Activated CD4-positive, alpha-beta T cell treated with anti-CD3 and anti-CD28 coated beads for 36 hours (primary cell): ENCODE measurements at regions of chr6 and their contacts with region 1.

Region 1: DNA sequence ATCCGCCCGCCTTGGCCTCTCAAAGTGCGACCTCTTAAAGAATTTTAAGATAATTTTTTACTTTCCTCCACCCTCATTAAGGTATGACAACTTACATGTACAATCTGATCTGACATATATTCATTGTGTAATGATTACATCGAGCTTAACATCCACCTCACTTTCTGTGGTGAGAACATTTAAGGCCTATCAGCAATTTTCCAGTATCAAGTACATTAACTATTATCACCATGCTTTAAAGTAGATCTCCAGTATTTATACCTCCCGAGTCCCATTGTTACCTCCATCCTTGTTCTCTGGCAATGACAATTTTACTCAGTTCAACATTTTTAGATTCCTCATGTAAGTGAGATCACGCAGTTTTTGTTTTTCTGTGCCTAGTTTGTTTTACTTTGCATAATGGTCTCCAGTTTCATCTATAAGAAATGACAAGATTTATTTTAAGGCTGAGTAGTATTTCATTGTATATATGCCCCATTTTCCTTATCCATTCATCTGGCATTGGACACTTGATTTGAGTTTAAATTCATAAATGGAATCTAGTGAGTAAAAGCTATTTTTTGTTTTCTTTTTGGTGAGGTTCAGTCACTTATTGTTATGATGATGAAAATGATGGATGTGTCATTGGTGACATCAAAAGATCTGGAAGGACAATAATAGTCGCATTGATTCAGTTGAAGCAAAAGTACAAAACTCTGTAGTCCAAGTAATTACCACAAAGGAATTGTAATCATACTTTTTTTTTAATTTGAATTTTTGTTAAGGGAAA is 87.0 kb downstream of the OR2B2 start:
- DNase-seq: no peak
- ATAC-seq: peak; percentile 3
- H3K4me3 Mint-ChIP-seq: peak overlapping the region; percentile 79
- H3K27ac Mint-ChIP-seq: peak overlapping the region; percentile 92
- H3K4me1 Mint-ChIP-seq: peaks cover 20% of the 10 kb centered on the region
- H3K27me3 Mint-ChIP-seq: no peaks in the 10 kb centered on the region

Region 2: DNA sequence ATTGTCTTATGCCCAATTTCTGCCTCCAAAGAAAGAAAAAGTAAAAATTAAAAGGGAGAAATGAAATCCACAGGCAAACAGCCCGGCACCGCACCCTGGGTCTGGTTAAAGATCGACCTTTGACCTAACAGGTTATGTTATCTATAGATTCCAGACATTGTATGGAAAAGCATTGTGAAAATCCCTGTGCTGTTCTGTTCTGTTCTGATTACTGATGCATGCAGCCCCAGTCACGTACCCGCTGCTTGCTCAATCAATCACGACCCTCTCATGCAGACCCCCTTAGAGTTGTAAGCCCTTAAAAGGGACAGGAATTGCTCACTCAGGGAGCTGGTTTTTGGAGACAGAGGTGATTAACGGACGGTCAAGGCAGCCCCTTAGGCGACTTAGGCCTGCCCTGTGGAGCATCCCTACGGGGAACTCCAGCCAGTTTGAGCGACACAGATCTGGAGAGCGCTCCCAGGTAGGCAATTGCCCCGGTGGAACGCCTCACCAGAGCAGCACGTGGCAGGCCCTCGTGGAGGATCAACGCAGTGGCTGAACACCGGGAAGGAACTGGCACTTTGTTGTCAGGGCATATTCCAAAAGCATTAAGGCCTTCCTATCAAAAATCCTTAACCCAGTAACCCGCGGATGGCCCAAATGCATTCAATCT is 1750.0 kb before region 1 on chr6:
- CTCF ChIA-PET with region 1: no interaction called
- POLR2A ChIA-PET with region 1: no interaction called
- intact Hi-C with region 1: no loop called
- DNase-seq: no peak
- ATAC-seq: no peak
- H3K4me3 Mint-ChIP-seq: no peak overlapping the region
- H3K27ac Mint-ChIP-seq: no peak overlapping the region
- H3K4me1 Mint-ChIP-seq: peaks cover 6% of the 10 kb centered on the region
- H3K27me3 Mint-ChIP-seq: no peaks in the 10 kb centered on the region

Region 3: DNA sequence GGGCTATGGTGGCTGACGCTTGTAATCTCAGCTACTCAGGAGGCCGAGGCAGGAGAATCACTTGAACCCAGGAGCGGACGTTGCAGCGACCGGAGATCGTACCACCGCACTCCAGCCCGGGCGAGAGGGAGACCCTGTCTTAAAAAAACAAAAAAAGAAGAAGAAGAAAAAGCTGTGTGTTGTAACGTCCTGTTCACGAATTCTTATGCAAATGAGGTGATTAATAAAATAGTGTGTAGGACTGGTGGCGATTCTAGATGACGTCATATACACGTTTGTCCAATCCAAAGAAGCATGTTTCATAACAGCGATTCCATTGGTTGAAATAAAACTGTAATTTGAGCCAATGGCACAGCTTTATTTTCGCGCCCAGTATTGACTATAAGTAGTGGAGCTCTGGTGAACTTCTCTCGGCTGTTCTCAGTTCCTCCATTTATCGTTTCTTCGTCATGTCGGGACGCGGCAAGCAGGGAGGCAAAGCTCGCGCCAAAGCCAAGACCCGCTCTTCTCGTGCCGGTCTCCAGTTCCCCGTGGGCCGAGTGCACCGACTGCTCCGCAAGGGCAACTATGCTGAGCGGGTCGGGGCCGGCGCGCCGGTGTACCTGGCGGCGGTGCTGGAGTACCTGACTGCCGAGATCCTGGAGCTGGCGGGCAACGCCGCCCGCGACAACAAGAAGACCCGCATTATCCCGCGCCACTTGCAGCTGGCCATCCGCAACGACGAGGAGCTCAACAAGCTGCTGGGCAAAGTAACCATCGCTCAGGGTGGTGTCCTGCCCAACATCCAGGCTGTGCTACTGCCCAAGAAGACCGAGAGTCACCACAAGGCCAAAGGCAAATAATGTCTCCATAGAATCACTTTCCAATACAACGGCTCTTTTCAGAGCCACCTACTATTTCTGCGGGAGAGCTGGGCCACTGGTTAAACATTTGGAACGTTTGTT is 40.0 kb after region 1 on chr6:
- CTCF ChIA-PET with region 1: interaction called, 3 read pairs
- POLR2A ChIA-PET with region 1: interaction called, 103 read pairs
- intact Hi-C with region 1: loop called in 1 of 2 experiments (anchors 1 kb)
- DNase-seq: peak; percentile 86
- ATAC-seq: peak; percentile 57
- H3K4me3 Mint-ChIP-seq: peak overlapping the region; percentile 94
- H3K27ac Mint-ChIP-seq: peak overlapping the region; percentile 99
- H3K4me1 Mint-ChIP-seq: peaks cover 40% of the 10 kb centered on the region
- H3K27me3 Mint-ChIP-seq: no peaks in the 10 kb centered on the region

Region 4: DNA sequence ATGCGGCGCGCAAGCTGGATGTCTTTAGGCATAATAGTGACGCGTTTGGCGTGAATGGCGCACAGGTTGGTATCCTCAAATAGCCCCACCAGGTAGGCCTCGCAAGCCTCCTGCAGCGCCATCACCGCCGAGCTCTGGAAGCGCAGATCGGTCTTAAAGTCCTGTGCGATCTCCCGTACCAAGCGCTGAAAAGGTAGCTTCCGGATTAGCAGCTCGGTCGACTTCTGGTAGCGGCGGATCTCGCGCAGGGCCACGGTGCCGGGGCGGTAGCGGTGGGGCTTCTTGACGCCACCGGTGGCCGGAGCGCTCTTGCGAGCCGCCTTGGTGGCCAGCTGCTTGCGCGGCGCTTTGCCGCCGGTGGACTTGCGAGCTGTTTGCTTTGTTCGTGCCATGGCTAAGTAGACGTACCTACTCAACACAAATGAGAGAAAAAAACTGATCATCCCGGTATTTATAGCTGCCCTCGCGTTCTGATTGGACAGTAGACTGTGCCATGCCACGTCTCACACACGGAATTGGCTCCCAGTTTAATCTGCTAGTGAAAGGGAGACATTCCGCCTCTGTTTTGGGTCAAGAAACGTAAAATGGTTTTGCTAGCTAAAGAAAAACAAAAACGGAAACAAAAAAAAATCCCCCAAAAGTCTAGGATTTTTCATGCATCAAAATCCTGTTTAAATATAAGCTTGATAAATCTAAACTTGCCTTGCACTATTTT is 46.9 kb after region 1 on chr6:
- CTCF ChIA-PET with region 1: interaction called, 3 read pairs
- POLR2A ChIA-PET with region 1: interaction called, 103 read pairs
- intact Hi-C with region 1: loop called in 1 of 2 experiments (anchors 1 kb)
- DNase-seq: peak; percentile 84
- ATAC-seq: peak; percentile 59
- H3K4me3 Mint-ChIP-seq: peak overlapping the region; percentile 81
- H3K27ac Mint-ChIP-seq: peak overlapping the region; percentile 96
- H3K4me1 Mint-ChIP-seq: peaks cover 40% of the 10 kb centered on the region
- H3K27me3 Mint-ChIP-seq: no peaks in the 10 kb centered on the region